Activated T-helper 2 cell treated with anti-CD3 and anti-CD28 coated beads, Interferon-gamma antibody, Interleukin-2, Interleukin-4, amounts not matched to agents 10 μg/mL and 5 μg/mL and 100 μg/mL, durations not matched to agents 14 hours and 24 hours and 36 hours (primary cell): ENCODE measurements at regions of chr9 and their contacts with region 1.

Region 1: GRCh38 chr9:4689687-4690104 is 10.3 kb downstream of the CDC37L1 start:
- DNase-seq: no peak
- H3K4me3 Mint-ChIP-seq: no peak overlapping the region
- H3K27ac Mint-ChIP-seq: peak overlapping the region; percentile 57
- H3K4me1 Mint-ChIP-seq: peaks cover 25% of the 10 kb centered on the region
- H3K27me3 Mint-ChIP-seq: no peaks in the 10 kb centered on the region

Region 2: DNA sequence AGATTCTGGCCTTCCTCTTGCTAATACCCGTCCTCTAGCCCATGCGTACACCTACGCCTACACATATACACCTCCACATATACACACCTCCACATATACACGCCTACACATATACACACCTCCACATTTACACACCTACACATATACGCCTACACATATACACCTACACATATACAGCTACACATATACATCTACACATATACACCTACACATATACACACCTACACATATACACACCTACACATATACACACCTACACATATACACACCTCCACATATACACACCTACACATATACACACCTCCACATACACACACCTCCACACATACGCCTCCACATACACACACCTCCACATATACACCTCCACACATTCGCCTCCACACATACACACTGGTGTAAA is 24.2 kb after region 1 on chr9:
- intact Hi-C with region 1: loop called (anchors 2 kb)
- DNase-seq: no peak
- H3K4me3 Mint-ChIP-seq: no peak overlapping the region
- H3K27ac Mint-ChIP-seq: peak overlapping the region; percentile 69
- H3K4me1 Mint-ChIP-seq: peaks cover 6% of the 10 kb centered on the region
- H3K27me3 Mint-ChIP-seq: no peaks in the 10 kb centered on the region